ENCODE measurements at regions of chr17 and their contacts with region 1.

Region 1: DNA sequence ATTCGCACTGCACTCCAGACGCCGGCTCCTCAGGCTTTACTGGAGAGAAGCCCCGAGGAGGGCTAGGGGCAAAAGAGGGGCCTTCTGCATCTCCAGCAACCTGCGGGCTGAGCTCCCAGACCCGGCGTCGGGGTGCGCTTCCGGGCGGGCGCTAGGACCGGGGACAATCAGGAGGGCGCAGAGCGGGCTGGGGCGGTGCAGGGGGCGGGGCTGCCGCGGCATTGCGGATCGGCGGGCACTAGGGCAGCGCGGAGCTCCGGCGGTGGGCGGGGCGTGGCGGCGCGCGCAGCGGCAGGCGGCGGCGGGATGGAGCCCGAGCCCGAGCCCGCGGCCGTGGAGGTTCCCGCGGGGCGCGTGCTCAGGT is at the start of gene TSEN54:
- DNase-seq: peak; percentile 56
- H3K4me3 ChIP-seq: peak within 1 kb of the TSS; percentile 75
- H3K27ac ChIP-seq: peak within 1 kb of the TSS; percentile 31
- H3K27me3 ChIP-seq: no peaks in the 10 kb centered on the region
- CTCF ChIP-seq: no peak
- polyA plus RNA-seq, gene TSEN54: 8.8 and 10.9 TPM in 2 replicates

Region 2: GRCh38 chr17:75313941-75314551 is 202.2 kb before region 1 on chr17:
- CTCF ChIA-PET with region 1: no interaction called
- POLR2A ChIA-PET with region 1: no interaction called
- DNase-seq: no peak
- H3K4me3 ChIP-seq: no peak overlapping the region
- H3K27ac ChIP-seq: no peak overlapping the region
- H3K27me3 ChIP-seq: no peaks in the 10 kb centered on the region
- CTCF ChIP-seq: no peak

Region 3: GRCh38 chr17:75430159-75430974 is 85.9 kb before region 1 on chr17:
- CTCF ChIA-PET with region 1: interaction called, 10 read pairs
- POLR2A ChIA-PET with region 1: interaction called, 3 read pairs
- DNase-seq: no peak
- H3K4me3 ChIP-seq: no peak overlapping the region
- H3K27ac ChIP-seq: no peak overlapping the region
- H3K27me3 ChIP-seq: no peaks in the 10 kb centered on the region
- CTCF ChIP-seq: peak; percentile 20; the same call in 1 of the 2 replicates

Region 4: DNA sequence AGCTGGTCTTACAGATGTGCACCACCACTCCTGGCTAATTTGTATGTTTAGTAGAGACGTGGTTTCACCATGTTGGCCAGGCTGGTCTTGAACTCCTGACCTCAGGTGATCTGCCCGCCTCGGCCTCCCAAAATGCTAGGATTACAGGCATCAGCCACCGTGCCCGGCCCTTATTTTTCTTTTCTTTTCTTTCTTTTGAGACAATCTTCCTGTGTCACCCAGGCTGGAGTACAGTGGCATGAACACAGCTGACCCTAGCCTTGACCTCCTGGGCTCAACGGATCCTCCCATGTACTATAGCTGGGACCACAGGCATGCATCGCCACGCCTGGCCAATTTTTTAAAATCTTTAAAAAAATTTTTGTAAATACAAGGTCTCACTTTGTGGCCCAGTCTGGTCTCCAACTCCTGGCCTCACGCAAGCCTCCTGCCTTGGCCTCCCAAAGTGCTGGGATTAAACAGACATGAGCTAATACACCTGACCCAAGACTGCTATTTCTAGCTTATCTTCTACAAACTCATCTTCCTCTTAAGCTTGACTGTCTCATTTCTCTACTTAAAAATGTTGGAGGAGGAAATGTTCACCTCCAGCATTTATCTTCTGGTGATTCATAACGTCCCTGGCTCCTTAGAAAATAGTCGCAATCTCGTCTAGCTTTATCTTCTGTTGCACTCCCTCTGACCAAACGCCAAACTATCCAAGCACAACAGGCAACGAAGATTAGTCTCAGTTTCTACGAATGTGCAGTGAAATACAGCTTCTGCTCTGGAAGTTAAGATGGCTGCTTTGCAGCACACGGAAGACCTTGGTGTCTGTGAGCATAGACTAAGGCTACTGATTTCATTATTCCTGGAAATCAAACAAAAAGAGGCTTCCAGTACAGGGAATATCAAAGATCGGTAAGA is 68.0 kb before region 1 on chr17:
- CTCF ChIA-PET with region 1: no interaction called
- POLR2A ChIA-PET with region 1: no interaction called
- DNase-seq: no peak
- H3K4me3 ChIP-seq: no peak overlapping the region
- H3K27ac ChIP-seq: no peak overlapping the region
- H3K27me3 ChIP-seq: no peaks in the 10 kb centered on the region
- CTCF ChIP-seq: no peak

Region 5: GRCh38 chr17:76246080-76247066 is 730.1 kb after region 1 on chr17:
- CTCF ChIA-PET with region 1: no interaction called
- POLR2A ChIA-PET with region 1: no interaction called
- DNase-seq: no peak
- H3K4me3 ChIP-seq: no peak overlapping the region
- H3K27ac ChIP-seq: no peak overlapping the region
- H3K27me3 ChIP-seq: peaks cover 42% of the 10 kb centered on the region
- CTCF ChIP-seq: no peak